Head of caudate nucleus (tissue), 42 donors: ENCODE measurements at regions of chr9 and their contacts with region 1.

Region 1: GRCh38 chr9:7045361-7045760 is 287.6 kb downstream of the KDM4C start:
- DNase-seq: no peak

Region 2: GRCh38 chr9:6907772-6908381 is 137.5 kb before region 1 on chr9:
- intact Hi-C with region 1: loop called (anchors 10 kb)
- DNase-seq: peak in 6 of 42 donors; percentile 21 to 64 (median 35)